ENCODE measurements at regions of chr11 and their contacts with region 1.

Region 1: DNA sequence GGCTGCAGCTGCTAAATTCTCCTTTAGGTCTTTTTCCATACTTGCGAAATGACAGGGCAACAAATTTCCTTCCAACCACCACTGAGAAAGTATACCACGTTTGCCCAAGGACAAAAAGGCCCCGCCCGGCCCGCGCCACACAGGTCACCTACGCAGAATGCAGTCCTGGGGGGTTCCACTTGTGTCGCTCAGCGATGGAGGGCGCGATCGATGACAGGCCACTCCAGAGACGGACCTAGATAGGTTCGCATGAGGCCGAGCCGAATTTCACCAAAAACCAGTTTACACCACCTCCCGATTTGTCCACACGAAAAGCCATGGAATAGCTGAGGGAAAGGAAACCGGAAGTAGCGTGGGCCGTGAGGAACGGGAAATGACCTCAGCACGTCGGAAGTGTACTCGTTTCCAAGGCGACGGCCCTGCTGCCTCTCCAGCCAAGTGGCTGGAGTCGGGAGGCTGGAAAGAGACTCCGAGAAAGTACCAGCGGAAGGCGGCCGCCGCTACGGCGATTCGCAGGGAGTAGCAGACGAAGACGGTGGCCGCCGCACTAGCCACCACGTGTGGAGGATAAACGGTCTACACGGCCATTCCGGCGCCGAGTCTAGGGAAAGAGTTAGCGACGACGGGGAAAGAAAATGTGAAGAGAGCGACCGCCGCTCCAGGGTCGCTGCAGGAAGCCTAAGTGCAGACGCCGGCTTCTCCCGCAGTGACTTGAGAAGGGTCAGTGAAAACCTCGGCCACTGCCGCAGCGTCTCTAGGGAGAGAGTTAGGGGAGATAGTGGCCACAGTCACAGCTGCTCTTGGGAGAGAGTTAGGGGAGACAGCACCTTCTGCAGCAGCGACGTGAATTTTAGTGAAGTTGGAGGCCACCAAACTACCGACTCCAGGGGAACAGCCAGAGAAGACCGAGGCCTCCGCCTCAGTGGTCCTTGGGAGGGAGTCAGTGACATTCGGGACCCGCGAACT is at the start of gene ANKRD42:
- DNase-seq: peak; percentile 92
- ATAC-seq: peak; percentile 75
- H3K4me3 Mint-ChIP-seq: peak within 1 kb of the TSS; percentile 95
- H3K27ac Mint-ChIP-seq: peak within 1 kb of the TSS; percentile 98
- H3K4me1 Mint-ChIP-seq: peaks cover 40% of the 10 kb centered on the region
- H3K27me3 Mint-ChIP-seq: no peaks in the 10 kb centered on the region
- total RNA-seq, gene ANKRD42: 3.1 to 4.9 TPM

Region 2: DNA sequence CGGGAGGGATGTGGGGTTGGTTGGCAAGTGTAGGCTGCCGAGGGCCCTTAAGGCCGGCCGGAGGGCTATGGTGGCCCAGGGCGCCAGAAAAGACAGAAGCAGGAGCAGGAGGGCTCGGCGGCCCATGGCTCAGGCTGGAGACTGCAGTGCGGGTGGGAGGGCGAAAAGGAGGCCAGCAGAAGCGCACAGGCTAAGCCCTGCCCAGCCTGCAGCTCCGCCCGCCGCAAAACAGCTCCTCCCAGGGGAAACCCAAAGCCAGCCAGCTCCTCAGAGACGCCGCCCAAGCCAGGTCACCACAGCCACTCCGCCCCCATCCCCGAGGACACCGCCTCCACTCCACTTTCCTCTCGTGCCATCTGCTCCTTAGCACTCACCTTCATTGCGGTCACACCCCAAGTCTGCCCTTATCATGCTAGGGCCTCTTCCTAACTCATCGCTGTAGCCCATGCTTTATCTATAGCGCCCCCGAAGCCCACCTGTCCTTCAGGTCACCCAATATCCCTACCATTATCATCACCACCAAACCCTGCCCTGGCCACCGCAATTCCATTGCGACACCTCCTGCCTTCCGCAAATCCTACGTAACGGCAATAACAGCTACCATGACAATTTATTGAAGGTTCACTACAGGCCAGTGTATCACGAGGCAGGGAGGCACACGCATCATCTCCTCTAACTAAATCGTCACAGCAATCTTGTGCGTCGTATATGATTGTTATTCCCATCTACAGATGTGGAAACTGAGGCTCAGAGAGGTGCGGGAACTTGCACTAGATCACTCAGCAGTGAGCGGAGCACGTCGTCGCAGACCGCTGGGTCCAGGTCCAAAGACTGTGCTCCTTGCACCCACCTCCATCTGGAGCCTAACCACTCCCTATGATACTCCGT is 293.1 kb before region 1 on chr11 and contains the start of gene PRCP:
- CTCF ChIA-PET with region 1: interaction called, 6 read pairs
- POLR2A ChIA-PET with region 1: no interaction called
- intact Hi-C with region 1: loop called (anchors 1 kb)
- DNase-seq: peak; percentile 97
- ATAC-seq: peak; percentile 85
- H3K4me3 Mint-ChIP-seq: peak within 1 kb of the TSS; percentile 91
- H3K27ac Mint-ChIP-seq: peak within 1 kb of the TSS; percentile 100
- H3K4me1 Mint-ChIP-seq: peaks cover 44% of the 10 kb centered on the region
- H3K27me3 Mint-ChIP-seq: no peaks in the 10 kb centered on the region
- total RNA-seq, gene PRCP: 18.2 to 23.4 TPM

Region 3: DNA sequence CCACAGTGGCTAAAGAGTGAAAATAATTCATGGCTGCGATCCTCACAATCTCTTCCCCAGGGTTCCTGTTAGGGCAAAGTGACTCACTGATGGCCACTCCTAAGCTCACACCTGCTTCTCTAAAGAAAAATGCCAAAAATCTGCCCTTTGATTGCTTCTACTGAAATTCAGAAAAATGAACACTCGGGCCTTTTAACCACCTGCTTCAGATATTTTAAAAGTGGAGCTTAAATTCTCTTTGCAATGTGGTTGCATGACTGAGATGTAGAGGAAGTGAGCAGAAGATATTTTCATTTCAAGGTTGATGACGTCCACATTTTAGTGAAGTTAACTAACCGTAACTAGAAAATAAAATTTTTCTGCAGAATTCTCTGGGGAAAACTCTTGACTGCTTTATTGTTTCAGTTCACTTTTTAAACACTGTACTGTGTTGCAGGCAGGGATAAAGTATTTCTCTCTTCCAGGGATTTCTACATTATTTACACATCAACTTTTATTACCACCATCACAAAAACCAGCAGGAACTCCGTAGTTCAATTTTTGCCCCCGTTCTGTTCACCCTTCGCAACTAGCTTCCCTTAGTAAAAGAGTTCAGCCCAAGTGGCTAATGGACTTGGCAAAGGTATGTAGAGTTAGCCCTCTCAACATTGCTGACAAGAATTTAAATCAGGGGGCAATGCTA is 130.4 kb before region 1 on chr11:
- CTCF ChIA-PET with region 1: no interaction called
- POLR2A ChIA-PET with region 1: no interaction called
- intact Hi-C with region 1: loop called in 1 of 2 experiments (anchors 2 kb)
- DNase-seq: no peak
- ATAC-seq: peak; percentile 84
- H3K4me3 Mint-ChIP-seq: peak overlapping the region; percentile 62
- H3K27ac Mint-ChIP-seq: peak overlapping the region; percentile 99
- H3K4me1 Mint-ChIP-seq: peaks cover 64% of the 10 kb centered on the region
- H3K27me3 Mint-ChIP-seq: no peaks in the 10 kb centered on the region

Region 4: GRCh38 chr11:83115551-83115950 is 78.0 kb before region 1 on chr11:
- CTCF ChIA-PET with region 1: no interaction called
- POLR2A ChIA-PET with region 1: no interaction called
- intact Hi-C with region 1: loop called in 1 of 2 experiments (anchors 2 kb)
- DNase-seq: no peak
- ATAC-seq: no peak
- H3K4me3 Mint-ChIP-seq: no peak overlapping the region
- H3K27ac Mint-ChIP-seq: no peak overlapping the region
- H3K4me1 Mint-ChIP-seq: peaks cover 30% of the 10 kb centered on the region
- H3K27me3 Mint-ChIP-seq: no peaks in the 10 kb centered on the region

Region 5: DNA sequence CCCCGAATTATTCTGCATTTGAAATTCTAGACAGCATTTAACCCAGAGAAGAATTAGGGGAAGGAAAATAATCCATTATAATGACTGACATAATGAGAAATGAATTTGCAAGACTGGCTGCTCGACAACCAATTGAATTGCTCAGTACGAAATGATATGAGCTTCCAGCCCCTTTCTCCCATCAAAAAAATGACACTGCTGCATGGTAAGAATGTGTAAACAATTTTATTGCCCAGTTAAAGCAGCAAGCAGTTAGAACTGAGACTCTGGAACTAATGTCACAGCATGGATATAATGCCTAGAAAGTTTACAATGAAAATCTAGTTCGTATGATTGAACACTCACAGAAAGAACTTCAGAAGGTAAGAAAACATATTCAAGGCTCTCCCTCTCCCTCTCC is 61.4 kb before region 1 on chr11:
- CTCF ChIA-PET with region 1: no interaction called
- POLR2A ChIA-PET with region 1: no interaction called
- intact Hi-C with region 1: no loop called
- DNase-seq: no peak
- ATAC-seq: no peak
- H3K4me3 Mint-ChIP-seq: no peak overlapping the region
- H3K27ac Mint-ChIP-seq: no peak overlapping the region
- H3K4me1 Mint-ChIP-seq: no peaks in the 10 kb centered on the region
- H3K27me3 Mint-ChIP-seq: no peaks in the 10 kb centered on the region

Region 6: GRCh38 chr11:83147895-83148294 is 45.7 kb before region 1 on chr11:
- CTCF ChIA-PET with region 1: no interaction called
- POLR2A ChIA-PET with region 1: no interaction called
- intact Hi-C with region 1: no loop called
- DNase-seq: no peak
- ATAC-seq: no peak
- H3K4me3 Mint-ChIP-seq: no peak overlapping the region
- H3K27ac Mint-ChIP-seq: no peak overlapping the region
- H3K4me1 Mint-ChIP-seq: peaks cover 2% of the 10 kb centered on the region
- H3K27me3 Mint-ChIP-seq: no peaks in the 10 kb centered on the region

Region 7: GRCh38 chr11:83285771-83286528 is 92.4 kb after region 1 on chr11 and contains the start of gene CCDC90B:
- CTCF ChIA-PET with region 1: no interaction called
- POLR2A ChIA-PET with region 1: interaction called, 4 read pairs
- intact Hi-C with region 1: loop called (anchors 1 kb)
- DNase-seq: peak; percentile 96
- ATAC-seq: peak; percentile 94
- H3K4me3 Mint-ChIP-seq: peak within 1 kb of the TSS; percentile 81
- H3K27ac Mint-ChIP-seq: peak within 1 kb of the TSS; percentile 98
- H3K4me1 Mint-ChIP-seq: peaks cover 35% of the 10 kb centered on the region
- H3K27me3 Mint-ChIP-seq: no peaks in the 10 kb centered on the region
- total RNA-seq, gene CCDC90B: 30.4 to 32.8 TPM